Uterus (tissue), 4 donors: ENCODE measurements at regions of chr1 and their contacts with region 1.

Region 1: DNA sequence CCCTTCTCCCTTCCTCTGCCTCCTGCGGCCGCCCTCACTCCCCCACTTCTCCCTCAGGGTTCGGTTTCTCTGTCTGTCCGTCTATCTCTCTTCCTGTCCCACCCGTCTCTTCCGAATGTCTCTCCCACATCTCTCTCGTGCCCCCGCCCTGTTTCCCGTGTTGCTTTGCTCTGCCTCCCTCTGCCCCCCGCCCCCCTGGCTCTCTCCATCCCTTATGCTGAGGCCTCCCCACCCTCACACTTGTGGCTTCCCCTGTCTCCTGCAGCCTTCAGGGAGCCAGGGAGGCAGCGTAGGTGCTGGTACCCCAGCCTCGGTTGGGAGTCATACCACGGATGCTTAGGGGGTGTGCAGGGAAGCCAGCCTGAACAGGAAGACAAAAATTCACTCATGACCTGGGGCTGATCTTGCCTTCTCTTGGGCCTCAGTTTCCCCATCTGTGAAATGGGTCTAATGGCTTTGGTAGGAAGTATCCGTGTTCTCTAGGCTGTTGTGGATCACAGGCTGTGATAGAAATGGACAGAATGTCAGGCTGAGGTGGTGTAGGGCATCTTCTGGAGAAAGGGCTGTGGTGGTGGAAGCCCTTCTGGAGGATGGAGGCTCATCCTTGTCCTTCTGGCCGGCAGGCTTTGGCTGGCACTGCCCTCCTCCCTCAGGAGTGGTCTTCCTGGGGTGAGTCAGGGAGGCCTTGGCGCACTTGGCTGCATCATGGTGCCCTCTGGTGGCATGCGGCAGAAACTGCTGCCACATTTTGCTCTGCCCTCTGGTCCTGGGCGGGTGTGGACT is 55.5 kb downstream of the FOXO6 start:
- DNase-seq: peak; percentile 61 to 67
- H3K4me3 ChIP-seq: no peak overlapping the region
- H3K27ac ChIP-seq: no peak overlapping the region
- H3K4me1 ChIP-seq: no peaks in the 10 kb centered on the region
- H3K27me3 ChIP-seq: no peaks in the 10 kb centered on the region
- CTCF ChIP-seq: peak; percentile 88 to 94 (median 90)
- POLR2A ChIP-seq: peak in 1 of 2 donors; percentile 24

Region 2: DNA sequence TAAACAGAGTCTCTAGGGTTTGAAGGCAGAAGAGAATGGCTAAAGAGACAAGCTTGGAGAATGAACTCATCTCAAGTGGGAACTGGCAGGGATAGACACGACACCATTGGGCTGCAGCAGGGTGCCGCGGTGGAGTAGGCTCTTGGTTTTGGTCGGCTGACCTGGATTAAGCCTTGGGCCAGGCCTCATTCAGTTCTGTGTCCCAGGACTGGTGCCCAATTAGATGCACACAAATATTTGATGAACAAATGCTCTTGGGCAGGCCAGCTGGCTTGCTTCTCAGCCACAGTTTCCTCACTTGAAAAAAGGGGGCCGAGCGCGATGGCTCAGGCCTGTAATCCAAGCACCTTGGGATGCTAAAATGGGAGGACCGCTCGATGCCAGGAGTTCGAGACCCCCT is 501.2 kb before region 1 on chr1:
- intact Hi-C with region 1: no loop called
- DNase-seq: no peak
- H3K4me3 ChIP-seq: no peak overlapping the region
- H3K27ac ChIP-seq: no peak overlapping the region
- H3K4me1 ChIP-seq: no peaks in the 10 kb centered on the region
- H3K27me3 ChIP-seq: no peaks in the 10 kb centered on the region
- CTCF ChIP-seq: no peak
- POLR2A ChIP-seq: no peak

Region 3: GRCh38 chr1:41003640-41004220 is 413.0 kb before region 1 on chr1:
- intact Hi-C with region 1: no loop called
- DNase-seq: peak; percentile 90 to 96
- H3K4me3 ChIP-seq: no peak overlapping the region
- H3K27ac ChIP-seq: peak overlapping the region; percentile 60 to 66
- H3K4me1 ChIP-seq: no peaks in the 10 kb centered on the region
- H3K27me3 ChIP-seq: no peaks in the 10 kb centered on the region
- CTCF ChIP-seq: peak; percentile 55 to 73 (median 57)
- POLR2A ChIP-seq: no peak

Region 4: GRCh38 chr1:41268154-41268770 is 148.5 kb before region 1 on chr1:
- intact Hi-C with region 1: loop called (anchors 5 kb)
- DNase-seq: peak; percentile 75 to 80
- H3K4me3 ChIP-seq: no peak overlapping the region
- H3K27ac ChIP-seq: no peak overlapping the region
- H3K4me1 ChIP-seq: no peaks in the 10 kb centered on the region
- H3K27me3 ChIP-seq: no peaks in the 10 kb centered on the region
- CTCF ChIP-seq: peak; percentile 96 to 97 (median 96)
- POLR2A ChIP-seq: no peak

Region 5: GRCh38 chr1:41282679-41283317 is 133.9 kb before region 1 on chr1:
- intact Hi-C with region 1: loop called (anchors 5 kb)
- DNase-seq: peak; percentile 22 to 31
- H3K4me3 ChIP-seq: no peak overlapping the region
- H3K27ac ChIP-seq: no peak overlapping the region
- H3K4me1 ChIP-seq: no peaks in the 10 kb centered on the region
- H3K27me3 ChIP-seq: no peaks in the 10 kb centered on the region
- CTCF ChIP-seq: peak; percentile 48 to 72 (median 68)
- POLR2A ChIP-seq: no peak

Region 6: GRCh38 chr1:41381692-41382477 is 34.9 kb before region 1 on chr1:
- intact Hi-C with region 1: no loop called
- DNase-seq: peak in 1 of 2 donors; percentile 67
- H3K4me3 ChIP-seq: peak overlapping the region; percentile 48 to 66
- H3K27ac ChIP-seq: peak overlapping the region; percentile 98 to 99
- H3K4me1 ChIP-seq: peaks cover 8% of the 10 kb centered on the region in 2 donors
- H3K27me3 ChIP-seq: no peaks in the 10 kb centered on the region
- CTCF ChIP-seq: no peak
- POLR2A ChIP-seq: peak in 1 of 2 donors; percentile 55